A549 (cell line): ENCODE measurements at regions of chr2 and their contacts with region 1.

Region 1: GRCh38 chr2:233251306-233252116 is at the start of gene ATG16L1:
- DNase-seq: peak; percentile 96 to 98
- ATAC-seq: peak; percentile 95 to 97
- H3K4me3 ChIP-seq: peak within 1 kb of the TSS; percentile 95
- H3K27ac ChIP-seq: peak within 1 kb of the TSS; percentile 91 to 99
- H3K4me1 ChIP-seq: peaks cover 56% of the 10 kb centered on the region
- CTCF ChIP-seq: peak; percentile 98
- EP300 ChIP-seq: no peak
- POLR2A ChIP-seq: peak; percentile 91
- RAD21 ChIP-seq: peak; percentile 97 to 100
- polyA plus RNA-seq, gene ATG16L1: 70.9 and 72.3 TPM in 2 replicates

Region 2: DNA sequence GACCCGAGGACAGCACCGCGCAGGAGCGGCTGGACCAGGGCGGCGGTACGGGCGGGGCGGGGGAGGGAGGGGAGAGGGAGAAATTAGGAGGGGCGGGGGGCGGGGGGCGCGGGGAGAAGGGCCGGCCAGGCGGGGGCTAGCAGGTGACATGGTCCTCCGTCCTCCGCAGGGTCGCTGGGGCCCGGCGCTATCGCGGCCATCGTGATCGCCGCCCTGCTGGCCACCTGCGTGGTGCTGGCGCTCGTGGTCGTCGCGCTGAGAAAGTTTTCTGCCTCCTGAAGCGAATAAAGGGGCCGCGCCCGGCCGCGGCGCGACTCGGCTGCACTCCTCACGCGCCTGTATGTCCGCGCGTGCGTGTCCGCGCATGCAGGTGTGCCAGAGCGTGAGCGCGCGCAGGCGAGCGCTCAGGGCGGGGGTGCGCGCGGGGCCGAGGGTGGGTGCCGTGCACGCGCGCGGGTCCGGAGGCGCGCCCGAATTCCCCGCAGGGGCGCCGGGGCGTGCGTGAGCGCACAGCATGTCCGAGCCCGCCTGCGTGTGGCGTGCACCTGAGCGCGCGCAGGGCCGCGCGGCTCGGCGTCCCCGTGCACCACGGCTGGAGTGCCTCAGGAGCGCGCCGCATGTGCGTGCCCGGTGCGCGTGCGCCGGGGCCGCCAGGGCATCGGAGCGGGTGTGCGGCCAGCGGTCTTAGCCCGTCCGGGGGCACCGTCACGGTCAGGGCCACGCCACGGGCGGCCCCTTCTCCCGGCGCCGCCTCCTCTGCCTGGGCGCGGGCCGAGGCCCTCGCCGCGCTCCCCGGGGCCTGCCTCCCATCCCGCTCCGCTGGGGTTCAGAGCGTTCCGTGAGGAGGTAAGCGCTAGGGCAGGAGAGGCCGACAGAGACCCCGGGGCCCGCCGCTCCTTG is 375.2 kb before region 1 on chr2:
- CTCF ChIA-PET with region 1: interaction called, 15 read pairs
- POLR2A ChIA-PET with region 1: interaction called, 3 read pairs
- DNase-seq: peak; percentile 47 to 72
- ATAC-seq: peak; percentile 57 to 67
- H3K4me3 ChIP-seq: peak overlapping the region; percentile 81
- H3K27ac ChIP-seq: peak overlapping the region; percentile 93 to 97
- H3K4me1 ChIP-seq: peaks cover 55% of the 10 kb centered on the region
- CTCF ChIP-seq: 0 out of 3 replicates have a peak, but pooled peaks have one; percentile 18
- EP300 ChIP-seq: no peak
- POLR2A ChIP-seq: peak; percentile 43; the same call in 1 of the 2 replicates
- RAD21 ChIP-seq: no peak; a peak in 1 of 5 replicates

Region 3: DNA sequence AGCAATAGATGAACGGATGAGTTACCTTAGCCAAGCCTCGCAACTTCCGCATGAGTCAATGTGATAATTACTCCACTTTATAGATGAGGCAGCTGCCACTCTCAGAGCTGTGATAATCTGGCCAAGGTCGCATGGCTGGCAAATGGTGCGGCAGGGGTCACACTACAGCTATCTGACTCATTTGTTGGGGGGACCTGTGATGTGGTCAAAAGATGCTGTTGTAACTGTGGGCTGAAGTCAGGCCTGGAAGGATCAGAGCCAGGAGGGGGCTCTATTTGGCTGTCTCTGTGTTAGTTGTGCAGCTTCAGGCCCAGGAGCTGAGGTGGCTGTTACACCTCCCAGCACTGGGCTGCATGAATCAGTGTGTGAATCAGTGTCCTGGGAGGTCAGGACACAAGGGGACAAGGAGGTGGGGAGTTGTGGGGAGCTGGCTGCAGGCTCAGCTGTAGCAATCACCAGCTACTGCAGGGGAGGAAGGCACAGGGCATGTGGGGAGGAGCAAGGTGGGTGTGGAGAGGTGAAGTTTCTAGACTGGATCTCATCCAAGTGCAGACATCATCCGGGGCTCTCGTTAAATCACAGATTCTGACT is 271.5 kb before region 1 on chr2:
- CTCF ChIA-PET with region 1: interaction called, 13 read pairs
- POLR2A ChIA-PET with region 1: interaction called, 5 read pairs
- DNase-seq: peak; percentile 79 to 88
- ATAC-seq: peak; percentile 92 to 97
- H3K4me3 ChIP-seq: no peak overlapping the region
- H3K27ac ChIP-seq: peak overlapping the region; percentile 74 to 86
- H3K4me1 ChIP-seq: peaks cover 36% of the 10 kb centered on the region
- CTCF ChIP-seq: peak; percentile 62
- EP300 ChIP-seq: peak in 1 of 2 experiments; percentile 39; a peak in 1 of 5 replicates
- POLR2A ChIP-seq: no peak
- RAD21 ChIP-seq: peak; percentile 87 to 88

Region 4: GRCh38 chr2:233261819-233262555 is 10.5 kb after region 1 on chr2:
- CTCF ChIA-PET with region 1: interaction called, 49 read pairs
- POLR2A ChIA-PET with region 1: interaction called, 3 read pairs
- DNase-seq: no peak
- ATAC-seq: no peak
- H3K4me3 ChIP-seq: no peak overlapping the region
- H3K27ac ChIP-seq: no peak overlapping the region
- H3K4me1 ChIP-seq: peaks cover 6% of the 10 kb centered on the region; the same call in 1 of the 3 replicates
- CTCF ChIP-seq: no peak
- EP300 ChIP-seq: no peak
- POLR2A ChIP-seq: no peak
- RAD21 ChIP-seq: no peak